Naive thymus-derived CD8-positive, alpha-beta T cell (primary cell): ENCODE measurements at regions of chr17 and their contacts with region 1.

Region 1: GRCh38 chr17:63697341-63698286 is 2.3 kb downstream of the LIMD2 start:
- DNase-seq: peak; percentile 76 to 94 (median 90)
- ATAC-seq: peak; percentile 24 to 41
- H3K4me3 Mint-ChIP-seq: peak overlapping the region; percentile 95 to 100 (median 98)
- H3K27ac Mint-ChIP-seq: peak overlapping the region; percentile 95 to 99 (median 98)
- H3K4me1 Mint-ChIP-seq: peaks cover 39 to 76% (median 63%) of the 10 kb centered on the region in 4 donors
- H3K27me3 Mint-ChIP-seq: no peaks in the 10 kb centered on the region

Region 2: DNA sequence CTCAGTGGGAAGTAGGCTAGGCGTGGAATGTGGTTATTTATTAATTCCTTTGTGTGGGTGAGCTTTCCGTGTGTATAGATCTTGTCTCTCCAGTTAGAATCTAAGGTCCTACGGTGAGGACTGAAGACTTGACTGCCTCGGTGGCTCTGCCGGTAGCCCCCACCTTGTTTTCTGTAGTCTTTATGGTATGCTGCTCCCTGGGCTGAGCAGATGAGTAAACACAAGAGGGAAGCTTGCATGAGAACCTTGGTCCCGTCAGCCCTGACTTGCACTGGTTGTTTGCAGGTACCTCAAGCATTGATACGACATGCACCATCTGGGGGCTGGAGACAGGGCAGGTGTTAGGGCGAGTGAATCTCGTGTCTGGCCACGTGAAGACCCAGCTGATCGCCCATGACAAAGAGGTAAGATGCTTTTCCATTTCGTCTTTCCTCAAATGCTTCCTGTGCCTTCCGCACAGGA is 118.0 kb before region 1 on chr17:
- POLR2A ChIA-PET with region 1: no interaction called
- DNase-seq: no peak
- ATAC-seq: no peak
- H3K4me3 Mint-ChIP-seq: no peak overlapping the region
- H3K27ac Mint-ChIP-seq: peak overlapping the region in 3 of 10 donors; percentile 1 to 71 (median 24)
- H3K4me1 Mint-ChIP-seq: peaks cover 8 to 38% (median 20%) of the 10 kb centered on the region in 4 donors
- H3K27me3 Mint-ChIP-seq: no peaks in the 10 kb centered on the region

Region 3: GRCh38 chr17:63621766-63622519 is 75.7 kb before region 1 on chr17 and contains the start of gene MAP3K3:
- POLR2A ChIA-PET with region 1: interaction called, 178 read pairs
- DNase-seq: peak; percentile 86 to 99 (median 98)
- ATAC-seq: peak; percentile 88 to 93
- H3K4me3 Mint-ChIP-seq: peak within 1 kb of the TSS; percentile 94 to 99 (median 97)
- H3K27ac Mint-ChIP-seq: peak within 1 kb of the TSS; percentile 87 to 96 (median 94)
- H3K4me1 Mint-ChIP-seq: peaks cover 16 to 51% (median 43%) of the 10 kb centered on the region in 4 donors
- H3K27me3 Mint-ChIP-seq: no peaks in the 10 kb centered on the region
- polyA plus RNA-seq, gene MAP3K3: 23.8 to 47.4 (median 24.7) TPM

Region 4: DNA sequence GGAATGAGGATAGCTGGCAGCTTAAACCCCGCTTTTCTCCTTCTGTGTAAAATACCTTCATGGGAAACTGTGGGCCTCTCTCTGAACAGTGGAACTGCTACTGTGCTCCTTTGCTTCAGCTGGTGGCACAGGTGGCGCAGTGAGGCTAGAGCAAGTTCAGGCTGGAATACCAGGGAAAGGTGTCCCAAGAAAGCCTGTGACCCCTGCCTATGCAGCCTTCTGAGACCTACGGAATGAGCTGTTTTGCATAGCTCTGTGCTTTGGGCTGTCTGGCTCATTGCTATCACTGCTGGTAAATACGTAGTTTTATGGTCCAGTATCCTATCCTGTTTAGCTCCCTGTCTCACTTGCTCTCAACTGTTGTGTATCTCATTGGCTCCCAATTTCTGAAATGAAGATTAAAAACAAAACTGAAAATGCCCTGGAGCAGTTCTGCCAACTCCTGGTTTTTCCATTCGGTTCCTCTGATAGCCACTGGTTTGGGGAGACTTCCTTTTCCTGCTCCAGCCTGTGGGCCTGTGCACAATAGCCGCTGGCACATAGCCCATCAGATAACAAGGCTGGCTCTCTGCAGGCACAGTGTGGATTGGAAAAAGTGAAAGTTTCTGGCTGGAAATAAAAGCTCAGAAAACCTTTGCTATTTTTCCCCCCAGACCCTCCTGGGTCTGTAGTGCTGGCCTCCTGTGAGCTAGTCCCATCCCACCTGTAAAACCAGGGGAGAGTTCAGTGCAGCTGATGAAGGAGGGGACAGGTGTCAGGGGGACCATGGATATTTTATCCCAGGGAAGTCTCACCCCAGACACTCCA is 21.8 kb before region 1 on chr17:
- POLR2A ChIA-PET with region 1: interaction called, 26 read pairs
- DNase-seq: no peak
- ATAC-seq: no peak
- H3K4me3 Mint-ChIP-seq: peak overlapping the region in 1 of 10 donors; percentile 32
- H3K27ac Mint-ChIP-seq: peak overlapping the region in 8 of 10 donors; percentile 34 to 88 (median 65)
- H3K4me1 Mint-ChIP-seq: peaks cover 5 to 29% (median 19%) of the 10 kb centered on the region in 4 donors
- H3K27me3 Mint-ChIP-seq: no peaks in the 10 kb centered on the region

Region 5: DNA sequence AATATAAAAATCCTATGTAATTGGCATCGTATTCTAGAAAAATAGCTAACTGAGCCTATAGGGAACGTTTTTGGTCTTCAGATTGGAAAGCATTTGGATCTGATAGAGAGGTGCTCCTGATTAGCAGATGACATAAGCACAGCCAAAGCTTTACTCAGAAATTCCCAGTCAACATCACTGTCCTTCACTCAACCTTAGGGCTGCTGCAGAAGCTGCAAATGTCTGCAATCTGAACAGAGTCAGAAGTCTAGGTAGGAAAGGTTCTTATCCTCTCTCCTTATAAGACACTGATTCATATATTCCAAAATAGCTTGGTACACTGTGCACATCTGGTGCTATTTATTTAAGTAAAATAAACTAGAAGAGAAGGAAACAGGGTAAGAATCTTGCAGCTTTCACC is 24.8 kb after region 1 on chr17:
- POLR2A ChIA-PET with region 1: interaction called, 1,071 read pairs
- DNase-seq: no peak
- ATAC-seq: no peak
- H3K4me3 Mint-ChIP-seq: no peak overlapping the region
- H3K27ac Mint-ChIP-seq: peak overlapping the region in 3 of 10 donors; percentile 15 to 80 (median 40)
- H3K4me1 Mint-ChIP-seq: peaks cover 0 to 8% (median 4%) of the 10 kb centered on the region in 4 donors
- H3K27me3 Mint-ChIP-seq: no peaks in the 10 kb centered on the region

Region 6: GRCh38 chr17:63751806-63752205 is 54.2 kb after region 1 on chr17:
- POLR2A ChIA-PET with region 1: interaction called, 15 read pairs
- DNase-seq: peak in 4 of 10 donors; percentile 17 to 35 (median 32)
- ATAC-seq: peak; percentile 82 to 87
- H3K4me3 Mint-ChIP-seq: peak overlapping the region; percentile 17 to 70 (median 46)
- H3K27ac Mint-ChIP-seq: peak overlapping the region; percentile 51 to 88 (median 84)
- H3K4me1 Mint-ChIP-seq: peaks cover 5 to 14% (median 10%) of the 10 kb centered on the region in 4 donors
- H3K27me3 Mint-ChIP-seq: no peaks in the 10 kb centered on the region

Region 7: DNA sequence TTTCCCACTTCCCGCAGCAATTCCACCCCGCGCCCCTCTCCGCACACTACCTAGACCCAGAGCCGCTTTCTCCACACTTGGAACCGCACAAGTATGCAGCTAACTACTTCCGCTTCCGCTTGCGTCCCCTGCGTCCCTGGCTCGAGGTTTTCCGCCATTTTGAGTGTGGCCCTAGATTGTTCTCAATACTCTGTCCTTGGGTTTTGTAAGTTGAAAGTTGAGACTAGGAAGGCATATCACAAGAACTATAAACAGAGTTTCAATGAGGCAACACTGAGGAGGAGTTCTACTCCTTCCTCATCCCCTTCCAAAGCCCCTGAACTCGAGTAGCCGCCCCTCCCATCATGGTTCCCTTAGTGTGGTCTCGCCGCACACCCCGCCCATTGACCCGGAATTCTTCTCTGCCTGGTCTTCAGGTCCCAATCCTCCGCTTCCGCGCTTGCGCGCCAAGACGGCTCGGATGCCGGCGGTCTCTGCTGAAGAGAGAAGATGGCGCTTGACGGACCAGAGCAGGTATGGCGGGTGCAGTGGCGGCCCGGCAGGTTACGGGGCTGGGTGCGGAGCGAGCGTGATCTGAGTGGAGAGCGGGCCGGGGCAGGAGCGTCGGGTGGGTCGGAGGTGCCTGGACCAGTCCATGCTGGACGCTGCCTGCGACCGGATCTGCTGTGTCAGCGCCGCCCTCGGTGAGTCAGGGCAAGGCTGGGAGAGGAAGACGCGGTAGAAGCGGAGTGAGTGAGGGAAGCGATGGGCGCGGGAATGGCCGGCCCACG is 129.6 kb after region 1 on chr17 and contains the starts of genes FTSJ3 and PSMC5:
- POLR2A ChIA-PET with region 1: interaction called, 146 read pairs
- DNase-seq: peak; percentile 90 to 98 (median 94)
- ATAC-seq: peak; percentile 91 to 93
- H3K4me3 Mint-ChIP-seq: peak within 1 kb of the TSS; percentile 92 to 100 (median 98)
- H3K27ac Mint-ChIP-seq: peak within 1 kb of the TSS; percentile 97 to 100 (median 99)
- H3K4me1 Mint-ChIP-seq: peaks cover 40 to 83% (median 81%) of the 10 kb centered on the region in 4 donors
- H3K27me3 Mint-ChIP-seq: no peaks in the 10 kb centered on the region
- polyA plus RNA-seq, gene FTSJ3: 16.8 to 43.1 (median 24.0) TPM
- polyA plus RNA-seq, gene PSMC5: 173 to 214 (median 191) TPM

Region 8: DNA sequence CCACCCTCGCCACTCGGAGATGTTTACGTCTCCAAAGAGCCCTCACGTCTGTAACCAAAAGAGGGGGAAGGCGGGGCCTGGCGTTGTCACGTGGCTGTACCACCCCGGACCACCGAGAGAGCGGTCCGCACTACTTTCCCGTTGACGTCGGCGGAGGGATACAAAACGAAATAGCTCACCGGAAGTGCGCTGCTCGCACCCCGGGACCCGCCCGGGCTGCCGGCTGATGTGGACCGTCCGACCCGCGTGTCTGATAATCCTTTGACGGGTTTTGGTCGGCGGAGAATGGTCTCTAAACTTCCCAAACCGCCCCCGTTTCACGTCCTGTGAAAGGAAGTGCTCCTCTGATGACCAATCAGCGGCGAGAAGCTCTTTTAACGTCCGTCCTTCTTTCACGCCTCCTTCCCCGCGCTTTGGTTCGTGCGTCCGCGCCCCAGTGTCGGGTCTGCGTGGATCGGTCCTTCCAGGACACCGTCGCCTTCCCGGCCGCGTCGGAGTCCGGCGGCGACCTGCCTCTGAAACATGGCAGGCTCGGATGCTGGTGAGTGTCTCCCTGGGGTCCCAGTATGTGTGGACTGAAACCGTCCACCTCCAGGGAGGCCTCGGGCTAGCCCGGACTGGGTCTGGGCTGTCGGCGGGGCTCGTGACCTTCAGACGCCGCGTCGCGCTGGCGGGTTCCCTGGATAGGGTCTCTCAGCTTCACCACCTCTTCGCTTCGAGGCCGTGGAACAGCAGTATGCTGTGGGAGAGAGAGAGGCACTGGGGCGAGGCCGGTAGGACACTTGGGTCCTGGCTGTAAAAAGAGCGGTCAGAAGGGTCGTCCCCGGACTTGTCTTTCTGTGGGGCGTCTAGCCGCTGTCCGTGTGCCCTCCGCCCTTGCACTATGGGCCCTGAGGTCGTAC is 809.2 kb after region 1 on chr17 and contains the start of gene CEP95:
- POLR2A ChIA-PET with region 1: interaction called, 26 read pairs
- DNase-seq: peak; percentile 88 to 99 (median 96)
- ATAC-seq: peak; percentile 60 to 70
- H3K4me3 Mint-ChIP-seq: peak within 1 kb of the TSS; percentile 98 to 100 (median 100)
- H3K27ac Mint-ChIP-seq: peak within 1 kb of the TSS; percentile 99 to 100 (median 100)
- H3K4me1 Mint-ChIP-seq: peaks cover 30 to 81% (median 57%) of the 10 kb centered on the region in 4 donors
- H3K27me3 Mint-ChIP-seq: peaks cover 0 to 6% (median 0%) of the 10 kb centered on the region in 5 donors
- polyA plus RNA-seq, gene CEP95: 8.6 to 20.1 (median 9.0) TPM